Activated CD8-positive, alpha-beta T cell treated with anti-CD3 and anti-CD28 coated beads for 36 hours (primary cell): ENCODE measurements at regions of chr1 and their contacts with region 1.

Region 1: GRCh38 chr1:96104906-96105305 is 616.7 kb upstream of the PTBP2 start:
- DNase-seq: no peak
- ATAC-seq: no peak
- H3K4me3 Mint-ChIP-seq: no peak overlapping the region
- H3K27ac Mint-ChIP-seq: no peak overlapping the region
- H3K4me1 Mint-ChIP-seq: no peaks in the 10 kb centered on the region
- H3K27me3 Mint-ChIP-seq: no peaks in the 10 kb centered on the region
- CTCF ChIP-seq: no peak

Region 2: DNA sequence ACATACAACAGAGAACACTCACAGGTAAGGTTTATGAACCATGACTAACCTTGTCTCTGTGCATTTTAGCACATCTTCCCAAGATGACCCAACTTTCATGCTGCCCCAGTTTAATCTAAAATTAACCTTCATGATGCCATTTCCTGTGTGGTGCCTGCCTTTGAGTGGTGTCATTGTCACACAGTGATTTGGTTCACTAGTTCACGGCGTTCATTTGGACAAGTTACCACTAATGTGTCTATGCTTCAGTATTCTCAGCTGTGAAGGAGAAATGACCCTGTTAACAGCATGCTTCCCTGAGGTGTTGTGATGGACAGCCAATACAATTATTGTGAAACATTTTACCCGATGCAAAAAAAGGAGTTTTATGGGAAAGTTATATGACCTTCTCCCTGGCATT is 177.8 kb before region 1 on chr1:
- CTCF ChIA-PET with region 1: no interaction called
- POLR2A ChIA-PET with region 1: no interaction called
- intact Hi-C with region 1: no loop called
- DNase-seq: no peak
- ATAC-seq: no peak
- H3K4me3 Mint-ChIP-seq: no peak overlapping the region
- H3K27ac Mint-ChIP-seq: no peak overlapping the region
- H3K4me1 Mint-ChIP-seq: no peaks in the 10 kb centered on the region
- H3K27me3 Mint-ChIP-seq: no peaks in the 10 kb centered on the region
- CTCF ChIP-seq: no peak

Region 3: DNA sequence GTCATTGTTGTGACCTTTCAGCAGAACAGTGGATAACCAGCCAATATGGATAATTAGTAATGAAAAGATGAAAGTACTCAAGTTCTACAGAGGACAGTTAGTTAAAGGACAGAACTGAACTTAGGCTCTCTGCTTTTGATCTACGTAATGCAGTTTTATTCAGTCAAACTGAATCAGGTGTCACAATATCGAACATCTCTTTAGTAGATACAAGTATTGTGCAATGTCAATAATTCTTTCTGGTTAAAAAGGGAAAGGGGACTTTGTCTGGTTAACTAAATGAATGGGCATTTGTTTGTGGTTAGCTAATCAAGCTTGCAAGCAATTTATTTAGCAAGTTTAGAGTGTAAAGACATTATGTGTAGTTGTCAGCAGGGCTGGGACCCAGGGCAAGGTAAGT is 54.5 kb after region 1 on chr1:
- CTCF ChIA-PET with region 1: no interaction called
- POLR2A ChIA-PET with region 1: no interaction called
- intact Hi-C with region 1: loop called (anchors 5 kb)
- DNase-seq: no peak
- ATAC-seq: no peak
- H3K4me3 Mint-ChIP-seq: no peak overlapping the region
- H3K27ac Mint-ChIP-seq: no peak overlapping the region
- H3K4me1 Mint-ChIP-seq: no peaks in the 10 kb centered on the region
- H3K27me3 Mint-ChIP-seq: no peaks in the 10 kb centered on the region
- CTCF ChIP-seq: no peak